ENCODE measurements at regions of chr7 and their contacts with region 1.

Region 1: GRCh38 chr7:141737834-141738591 is at the start of gene SSBP1:
- DNase-seq: peak; percentile 99
- H3K4me3 ChIP-seq: peak within 1 kb of the TSS; percentile 77 to 100 (median 98)
- H3K27ac ChIP-seq: peak within 1 kb of the TSS; percentile 87 to 93
- H3K4me1 ChIP-seq: peaks cover 9 to 26% (median 20%) of the 10 kb centered on the region in 4 experiments
- H3K27me3 ChIP-seq: no peaks in the 10 kb centered on the region

Region 2: DNA sequence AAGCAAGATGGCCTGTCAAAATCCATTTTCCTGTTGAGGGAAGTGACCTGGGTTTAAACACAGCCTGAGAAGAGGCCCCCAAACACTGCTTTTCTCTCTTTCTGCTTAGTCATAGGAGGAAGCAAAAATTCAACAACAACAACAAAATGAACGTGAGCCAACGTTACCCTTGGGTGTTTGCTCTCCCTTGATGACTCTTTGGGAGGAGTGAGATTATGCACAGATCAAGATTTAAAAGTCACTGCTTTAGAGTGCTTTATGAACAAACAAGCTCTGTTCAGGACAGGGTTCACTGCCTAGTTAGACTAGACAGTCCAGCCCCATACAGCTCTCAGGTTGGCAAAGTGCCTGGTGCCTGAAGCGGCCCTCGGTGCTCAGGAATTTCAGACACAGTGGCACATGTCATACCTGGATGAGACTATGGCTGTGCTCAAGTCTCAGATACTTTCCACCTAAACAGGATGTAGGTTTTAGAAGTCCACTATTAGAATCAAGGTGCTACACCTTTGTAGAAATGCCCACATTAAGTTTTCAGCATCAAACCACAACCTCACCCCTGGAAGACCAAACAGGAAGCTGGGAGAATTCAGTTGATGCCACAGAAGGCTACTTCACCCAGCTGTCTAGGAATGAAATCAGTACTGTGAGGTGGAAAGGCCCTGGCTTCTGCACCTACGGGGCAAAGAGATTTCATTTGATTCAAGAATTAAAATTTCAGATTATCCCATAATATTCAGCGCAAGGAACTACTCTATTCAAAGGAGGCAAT is 74.7 kb before region 1 on chr7:
- CTCF ChIA-PET with region 1: interaction called, 15 read pairs
- POLR2A ChIA-PET with region 1: interaction called, 3 read pairs
- DNase-seq: peak; percentile 12 to 76 (median 67)
- H3K4me3 ChIP-seq: peak overlapping the region in 2 of 7 experiments; percentile 7 to 11
- H3K27ac ChIP-seq: peak overlapping the region; percentile 10 to 68
- H3K4me1 ChIP-seq: peaks cover 13 to 52% (median 46%) of the 10 kb centered on the region in 4 experiments
- H3K27me3 ChIP-seq: no peaks in the 10 kb centered on the region

Region 3: DNA sequence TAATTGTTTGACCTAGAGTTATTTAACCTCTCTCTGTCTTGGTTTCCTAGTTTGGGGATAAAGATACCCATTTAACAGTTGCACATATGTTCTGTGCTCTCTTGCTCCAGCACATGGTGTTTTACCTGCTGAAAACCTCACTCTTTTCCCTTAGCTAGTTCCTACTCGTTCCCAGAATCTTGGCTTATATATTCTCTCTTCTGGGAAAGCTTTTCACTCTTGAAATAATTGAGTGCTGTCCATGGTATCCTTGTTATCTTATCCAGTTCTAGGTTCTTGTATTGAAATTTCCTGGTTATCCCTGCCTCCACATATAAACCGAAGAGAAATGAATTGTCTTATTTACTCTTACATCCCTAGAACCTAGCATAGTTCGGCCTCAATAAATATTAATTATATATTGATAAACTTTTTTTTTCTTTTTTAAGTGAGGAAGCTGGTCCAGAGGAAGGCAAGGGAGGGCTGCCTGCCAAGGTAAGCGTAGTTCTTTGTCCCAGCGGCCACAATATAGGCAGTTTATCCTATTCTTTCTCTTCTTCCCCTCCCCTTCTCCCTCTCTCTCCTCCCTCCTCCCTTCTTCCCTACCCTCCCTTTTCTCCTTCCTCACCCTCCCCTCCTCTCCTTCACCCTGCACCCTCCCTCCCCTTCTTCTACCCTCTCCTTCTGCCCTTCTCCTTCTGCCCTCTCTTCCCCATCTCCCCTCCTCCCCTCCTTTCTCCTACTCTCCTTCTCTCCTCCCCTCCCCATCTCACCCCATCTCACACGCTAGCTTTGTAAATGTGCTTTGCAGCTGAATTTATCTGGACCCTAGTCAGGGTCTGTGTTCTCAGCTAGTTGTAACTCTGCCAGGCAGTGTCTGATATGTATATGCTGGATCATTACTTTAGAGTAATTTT is 22.0 kb before region 1 on chr7:
- CTCF ChIA-PET with region 1: interaction called, 14 read pairs
- POLR2A ChIA-PET with region 1: no interaction called
- DNase-seq: no peak
- H3K4me3 ChIP-seq: no peak overlapping the region
- H3K27ac ChIP-seq: no peak overlapping the region
- H3K4me1 ChIP-seq: no peaks in the 10 kb centered on the region
- H3K27me3 ChIP-seq: no peaks in the 10 kb centered on the region